HEK293T (cell line): ENCODE measurements at regions of chr4 and their contacts with region 1.

Region 1: GRCh38 chr4:173752610-173753230 is 222.7 kb upstream of the HAND2 start:
- DNase-seq: peak; percentile 54

Region 2: DNA sequence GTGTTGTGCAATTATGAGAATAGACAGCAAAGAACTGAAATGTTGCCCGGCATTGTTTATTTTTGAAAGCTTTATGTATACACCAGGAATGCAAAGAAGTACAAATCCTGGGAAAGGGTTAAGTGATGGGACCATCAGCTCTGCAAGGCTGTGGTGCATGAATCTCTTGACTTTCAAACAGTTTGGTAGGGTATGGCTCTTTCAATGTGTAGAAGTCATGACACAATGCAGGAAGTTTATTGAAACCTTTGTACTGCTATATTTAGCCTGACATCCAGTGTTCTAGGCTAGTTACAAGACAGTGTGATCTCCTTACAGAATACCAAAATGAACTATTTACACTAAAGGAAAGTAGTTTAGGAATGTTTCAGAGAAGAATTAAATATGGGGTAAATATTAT is 15.9 kb before region 1 on chr4:
- CTCF ChIA-PET with region 1: interaction called, 19 read pairs
- POLR2A ChIA-PET with region 1: no interaction called
- DNase-seq: no peak

Region 3: GRCh38 chr4:173763374-173763773 is 10.7 kb after region 1 on chr4:
- CTCF ChIA-PET with region 1: interaction called, 21 read pairs
- POLR2A ChIA-PET with region 1: no interaction called
- DNase-seq: no peak